ENCODE measurements at regions of chr13 and their contacts with region 1.

Region 1: DNA sequence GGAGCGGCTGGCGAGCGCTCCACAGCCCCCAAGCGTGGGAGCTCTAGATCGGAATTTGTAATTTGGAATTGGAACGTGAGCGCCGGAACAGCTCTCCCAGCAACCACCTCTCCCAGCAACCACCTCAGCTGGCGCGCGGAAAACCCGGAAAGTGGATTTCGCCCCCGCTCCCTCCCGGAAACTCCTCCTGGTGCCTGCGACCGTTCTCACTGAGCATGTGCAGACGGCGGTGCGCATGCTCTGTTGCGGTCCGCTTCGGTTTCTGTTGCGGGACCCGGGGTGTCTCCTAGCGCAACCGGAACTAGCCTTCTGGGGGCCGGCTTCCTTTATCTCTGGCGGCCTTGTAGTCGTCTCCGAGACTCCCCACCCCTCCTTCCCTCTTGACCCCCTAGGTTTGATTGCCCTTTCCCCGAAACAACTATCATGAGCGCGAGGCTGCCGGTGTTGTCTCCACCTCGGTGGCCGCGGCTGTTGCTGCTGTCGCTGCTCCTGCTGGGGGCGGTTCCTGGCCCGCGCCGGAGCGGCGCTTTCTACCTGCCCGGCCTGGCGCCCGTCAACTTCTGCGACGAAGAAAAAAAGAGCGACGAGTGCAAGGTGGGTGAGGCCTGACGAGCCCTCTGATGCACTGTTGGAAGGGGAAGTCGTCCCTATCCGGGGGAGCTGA is at the start of gene TM9SF2:
- DNase-seq: peak; percentile 99
- H3K4me3 Mint-ChIP-seq: peak within 1 kb of the TSS; percentile 94
- H3K27ac Mint-ChIP-seq: peak within 1 kb of the TSS; percentile 96
- H3K4me1 Mint-ChIP-seq: peaks cover 60% of the 10 kb centered on the region
- H3K27me3 Mint-ChIP-seq: no peaks in the 10 kb centered on the region
- total RNA-seq, gene TM9SF2: 57.8 and 60.2 TPM in 2 replicates

Region 2: DNA sequence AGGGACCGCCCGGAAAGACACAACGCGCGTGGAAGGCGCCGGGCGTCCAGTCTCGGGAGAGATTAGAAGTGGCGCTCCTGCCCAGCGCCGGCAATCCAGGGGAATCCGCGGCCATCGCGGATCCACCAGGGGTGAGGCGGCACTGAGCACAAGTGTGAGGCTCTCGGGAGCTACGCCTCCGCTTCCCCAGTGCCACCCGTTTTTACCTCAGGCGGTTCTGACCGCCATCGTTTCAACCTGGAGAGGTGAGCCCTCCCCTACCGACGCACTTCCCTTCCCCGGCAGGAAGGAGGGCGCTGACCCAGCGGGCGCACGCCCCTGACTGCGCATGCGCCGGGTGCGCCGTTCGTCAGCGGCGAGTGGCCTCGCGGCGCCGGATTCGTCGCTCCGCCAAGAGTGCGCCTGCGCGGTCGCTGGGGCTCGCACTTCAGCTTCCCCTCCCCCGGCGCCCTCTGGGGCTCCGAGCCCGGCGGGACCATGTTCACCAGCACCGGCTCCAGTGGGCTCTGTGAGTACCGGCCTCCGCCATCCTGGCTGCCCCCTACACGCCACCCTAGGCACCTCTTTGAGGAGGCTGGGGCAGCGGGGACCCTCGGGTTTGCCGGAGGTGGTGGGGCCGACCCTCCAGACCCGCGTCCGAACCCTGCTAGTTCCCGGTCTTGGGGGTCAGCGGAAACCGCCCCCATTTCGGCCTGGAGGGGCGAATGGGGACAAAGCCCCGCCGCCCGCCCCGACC is 300.7 kb before region 1 on chr13 and contains the start of gene UBAC2:
- intact Hi-C with region 1: loop called (anchors 1 kb)
- DNase-seq: peak; percentile 99
- H3K4me3 Mint-ChIP-seq: peak within 1 kb of the TSS; percentile 97
- H3K27ac Mint-ChIP-seq: peak within 1 kb of the TSS; percentile 97
- H3K4me1 Mint-ChIP-seq: peaks cover 46% of the 10 kb centered on the region
- H3K27me3 Mint-ChIP-seq: no peaks in the 10 kb centered on the region
- total RNA-seq, gene UBAC2: 52.6 and 52.8 TPM in 2 replicates

Region 3: DNA sequence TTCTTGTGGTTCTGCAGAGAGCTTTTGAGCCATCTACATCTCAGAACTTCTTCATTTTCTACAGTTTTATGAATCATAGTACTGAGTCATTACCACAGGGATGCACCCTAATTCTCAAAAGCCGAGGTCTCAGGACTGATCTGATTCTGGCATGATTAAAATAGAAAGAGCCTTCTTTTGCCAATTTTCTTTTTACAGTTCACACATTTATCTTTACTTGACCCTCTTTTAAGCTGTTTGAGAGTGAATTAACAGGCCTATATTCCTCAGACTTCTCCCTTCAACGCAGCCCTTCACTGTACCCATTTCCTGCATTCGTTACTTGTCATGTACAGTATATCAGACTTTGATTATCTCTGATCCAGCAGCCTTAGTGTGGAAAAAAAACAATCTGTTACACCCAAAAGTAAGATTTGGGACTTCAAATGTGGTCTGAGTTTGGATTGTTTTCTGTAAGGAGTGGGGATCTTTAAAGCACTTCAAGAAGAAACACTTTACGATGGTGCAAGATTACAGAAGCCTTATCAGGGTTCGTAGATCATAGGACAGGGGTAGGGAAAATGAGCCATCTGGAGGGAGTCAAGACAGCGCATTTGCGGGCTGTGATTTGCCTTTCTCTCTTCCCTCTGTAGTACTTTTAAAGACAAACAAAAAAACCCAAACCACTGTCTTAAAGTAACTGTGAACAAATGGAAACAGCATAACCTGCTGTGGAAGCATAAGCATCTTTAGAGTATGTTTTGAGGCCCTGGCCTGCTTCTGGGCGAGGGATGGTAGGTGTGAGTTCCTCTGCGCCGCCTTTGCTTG is 178.8 kb before region 1 on chr13:
- intact Hi-C with region 1: loop called (anchors 5 kb)
- DNase-seq: peak; percentile 81
- H3K4me3 Mint-ChIP-seq: peak overlapping the region; percentile 63
- H3K27ac Mint-ChIP-seq: peak overlapping the region; percentile 98
- H3K4me1 Mint-ChIP-seq: peaks cover 59% of the 10 kb centered on the region
- H3K27me3 Mint-ChIP-seq: no peaks in the 10 kb centered on the region

Region 4: GRCh38 chr13:99442273-99442895 is 58.9 kb before region 1 on chr13:
- intact Hi-C with region 1: loop called (anchors 1 kb)
- DNase-seq: peak; percentile 89
- H3K4me3 Mint-ChIP-seq: no peak overlapping the region
- H3K27ac Mint-ChIP-seq: no peak overlapping the region
- H3K4me1 Mint-ChIP-seq: peaks cover 8% of the 10 kb centered on the region
- H3K27me3 Mint-ChIP-seq: peaks cover 31% of the 10 kb centered on the region

Region 5: DNA sequence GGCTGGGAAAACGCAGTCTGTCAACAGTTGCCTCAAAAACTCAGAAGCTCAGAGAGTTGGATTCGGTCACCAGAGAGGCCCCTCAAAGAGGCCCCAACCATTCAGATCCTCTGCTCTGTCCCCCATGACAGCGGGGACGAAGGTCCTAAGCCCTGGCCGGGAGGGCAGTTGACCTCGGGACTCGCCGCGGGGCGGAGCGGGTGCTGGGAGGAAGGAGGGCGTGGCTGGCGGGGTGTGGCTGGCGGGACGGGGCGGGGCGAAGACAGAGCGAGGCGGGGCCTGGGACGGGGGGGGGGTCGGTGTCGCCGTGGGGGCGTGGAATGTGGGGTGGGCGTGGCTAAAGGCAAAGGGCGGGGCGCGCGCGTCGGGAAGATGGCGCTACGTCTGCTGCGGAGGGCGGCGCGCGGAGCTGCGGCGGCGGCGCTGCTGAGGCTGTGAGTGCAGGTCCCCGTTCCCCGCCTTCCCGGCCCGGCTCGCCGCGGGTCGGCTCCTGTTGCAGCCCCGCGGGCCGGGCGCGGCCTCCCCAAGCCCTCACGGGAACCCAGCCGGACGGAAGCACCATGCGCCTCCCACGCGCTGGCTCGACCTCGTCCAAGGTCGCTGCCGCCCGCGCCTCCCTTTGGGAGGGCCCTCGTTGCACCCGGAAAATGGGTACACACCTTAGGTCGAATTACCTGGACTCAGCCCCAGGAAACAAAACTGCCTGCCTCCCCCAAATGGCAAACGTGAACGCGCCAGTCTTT is 105.2 kb after region 1 on chr13:
- intact Hi-C with region 1: loop called (anchors 1 kb)
- DNase-seq: peak; percentile 96
- H3K4me3 Mint-ChIP-seq: peak within 1 kb of the TSS; percentile 87
- H3K27ac Mint-ChIP-seq: peak within 1 kb of the TSS; percentile 86
- H3K4me1 Mint-ChIP-seq: peaks cover 18% of the 10 kb centered on the region
- H3K27me3 Mint-ChIP-seq: no peaks in the 10 kb centered on the region

Measured in activated CD4-positive, alpha-beta T cell treated with anti-CD3 and anti-CD28 coated beads, Interleukin-2, amount 10 ng/mL, durations not matched to agents 24 days and 14 days (primary cell).